GM12878 (cell line): ENCODE measurements at regions of chr14 and their contacts with region 1.

Region 1: GRCh38 chr14:93892923-93893558 is 34.1 kb upstream of the FAM181A start:
- DNase-seq: no peak
- ATAC-seq: peak; percentile 90
- H3K4me3 ChIP-seq: no peak overlapping the region
- H3K27ac ChIP-seq: no peak overlapping the region
- H3K4me1 ChIP-seq: no peaks in the 10 kb centered on the region
- H3K27me3 ChIP-seq: peaks cover 6 to 12% of the 10 kb centered on the region in 2 experiments
- CTCF ChIP-seq: peak; percentile 82 to 99 (median 98)
- EP300 ChIP-seq: no peak
- POLR2A ChIP-seq: no peak
- RAD21 ChIP-seq: peak; percentile 75

Region 2: GRCh38 chr14:93734086-93734822 is 158.8 kb before region 1 on chr14:
- CTCF ChIA-PET with region 1: no interaction called
- POLR2A ChIA-PET with region 1: no interaction called
- RAD21 ChIA-PET with region 1: no interaction called
- SMC1A ChIA-PET with region 1: no interaction called
- in situ Hi-C with region 1: no loop called
- intact Hi-C with region 1: loop called (anchors 5 kb)
- DNase-seq: no peak
- ATAC-seq: no peak
- H3K4me3 ChIP-seq: no peak overlapping the region
- H3K27ac ChIP-seq: no peak overlapping the region
- H3K4me1 ChIP-seq: no peaks in the 10 kb centered on the region
- H3K27me3 ChIP-seq: no peaks in the 10 kb centered on the region
- CTCF ChIP-seq: no peak
- EP300 ChIP-seq: no peak
- POLR2A ChIP-seq: no peak
- RAD21 ChIP-seq: no peak

Region 3: GRCh38 chr14:93788543-93789227 is 104.4 kb before region 1 on chr14:
- CTCF ChIA-PET with region 1: no interaction called
- POLR2A ChIA-PET with region 1: no interaction called
- RAD21 ChIA-PET with region 1: no interaction called
- SMC1A ChIA-PET with region 1: no interaction called
- in situ Hi-C with region 1: no loop called
- intact Hi-C with region 1: no loop called
- DNase-seq: no peak
- ATAC-seq: no peak
- H3K4me3 ChIP-seq: no peak overlapping the region
- H3K27ac ChIP-seq: no peak overlapping the region
- H3K4me1 ChIP-seq: no peaks in the 10 kb centered on the region
- H3K27me3 ChIP-seq: peaks cover 6 to 8% of the 10 kb centered on the region in 2 experiments; a peak in 3 of 4 replicates
- CTCF ChIP-seq: no peak
- EP300 ChIP-seq: no peak
- POLR2A ChIP-seq: no peak
- RAD21 ChIP-seq: no peak